ENCODE measurements at regions of chr20 and their contacts with region 1.

Region 1: GRCh38 chr20:46681032-46681854 is 8.0 kb downstream of the TP53RK start:
- DNase-seq: no peak
- H3K4me3 ChIP-seq: no peak overlapping the region
- CTCF ChIP-seq: peak; percentile 74

Region 2: GRCh38 chr20:46520976-46521579 is 160.2 kb before region 1 on chr20:
- CTCF ChIA-PET with region 1: interaction called, 61 read pairs
- POLR2A ChIA-PET with region 1: no interaction called
- DNase-seq: no peak
- H3K4me3 ChIP-seq: no peak overlapping the region
- CTCF ChIP-seq: peak; percentile 68

Region 3: GRCh38 chr20:46583411-46584214 is 97.6 kb before region 1 on chr20:
- CTCF ChIA-PET with region 1: no interaction called
- POLR2A ChIA-PET with region 1: no interaction called
- DNase-seq: no peak
- H3K4me3 ChIP-seq: no peak overlapping the region
- CTCF ChIP-seq: no peak

Region 4: DNA sequence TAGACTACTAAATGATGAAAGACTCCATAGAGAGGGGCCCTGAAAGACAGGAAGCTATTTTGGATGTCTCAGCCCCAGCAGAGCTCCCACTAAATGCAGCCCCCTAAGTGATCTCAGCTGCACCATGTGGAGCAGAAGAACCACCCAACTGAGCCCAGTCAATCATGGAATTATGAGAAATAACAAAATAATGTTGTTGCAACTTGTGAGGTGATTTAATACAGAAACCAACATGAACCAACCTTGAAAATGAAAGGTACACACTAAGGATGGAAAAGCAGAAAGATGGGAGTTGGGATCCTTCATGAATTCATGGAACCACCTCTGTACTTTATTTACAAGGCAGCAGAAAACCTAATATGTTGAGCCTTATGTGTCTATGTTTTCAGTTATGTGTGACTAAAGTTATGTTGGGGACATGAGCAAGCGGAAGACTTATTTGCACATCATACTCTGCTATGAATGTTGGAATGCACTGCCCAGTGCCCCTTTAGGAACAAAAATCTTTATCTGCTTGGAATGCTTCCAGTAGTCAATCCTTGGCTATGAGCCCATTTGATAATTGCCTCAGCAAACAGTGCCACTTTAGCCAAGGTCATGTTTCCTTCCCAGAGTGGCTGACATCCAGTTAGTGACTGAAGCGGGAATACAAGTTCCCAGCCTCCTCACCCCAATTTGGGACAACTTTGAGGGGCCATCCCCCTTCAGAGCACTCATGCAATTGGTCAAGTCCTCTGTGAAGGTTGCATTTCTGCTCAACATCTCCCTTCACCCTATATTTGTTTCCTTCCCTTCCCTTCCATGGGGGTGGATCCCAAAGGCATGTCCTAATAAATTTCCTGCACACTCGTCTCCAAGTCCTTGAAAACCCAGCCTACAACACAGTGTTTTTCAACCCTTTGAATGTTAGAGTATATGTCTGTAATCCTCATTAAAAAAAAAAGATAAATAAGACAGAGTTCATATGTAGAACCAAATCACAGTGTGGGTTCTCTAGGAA is 10.4 kb before region 1 on chr20:
- CTCF ChIA-PET with region 1: interaction called, 25 read pairs
- POLR2A ChIA-PET with region 1: no interaction called
- DNase-seq: no peak
- H3K4me3 ChIP-seq: no peak overlapping the region
- CTCF ChIP-seq: no peak

Region 5: DNA sequence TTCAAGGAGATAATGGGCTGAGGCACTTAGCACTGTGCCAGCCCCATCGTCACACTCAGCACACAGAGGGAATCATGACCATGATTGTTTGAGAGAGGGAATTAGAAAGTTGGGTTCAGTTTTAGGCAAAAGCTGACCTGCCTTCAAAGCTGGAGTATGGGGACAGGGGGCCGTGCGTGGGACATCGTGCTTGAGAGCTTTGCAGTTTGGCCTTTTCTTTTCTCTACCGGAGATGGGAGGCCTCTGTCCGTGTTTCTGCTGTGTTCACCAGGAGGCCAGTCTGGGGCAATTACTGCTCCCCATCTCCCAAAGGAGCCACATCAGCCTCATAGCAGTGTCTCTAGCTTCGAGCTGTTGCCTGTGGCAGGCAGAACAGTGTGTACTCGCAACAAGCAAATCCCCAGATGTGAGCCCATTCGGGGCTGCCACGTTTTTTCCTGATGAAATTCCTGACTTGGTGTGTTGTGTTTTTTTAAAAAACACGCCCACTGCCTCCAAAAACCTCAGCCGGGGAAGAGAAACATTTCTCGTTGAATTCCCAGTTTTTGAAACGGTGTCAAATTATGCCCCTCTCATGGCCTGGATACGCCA is 233.6 kb after region 1 on chr20:
- CTCF ChIA-PET with region 1: no interaction called
- POLR2A ChIA-PET with region 1: no interaction called
- DNase-seq: no peak
- H3K4me3 ChIP-seq: no peak overlapping the region
- CTCF ChIP-seq: no peak